Tibial artery (tissue), 4 donors: ENCODE measurements at regions of chr11 and their contacts with region 1.

Region 1: GRCh38 chr11:111200010-111200534 is 45.5 kb upstream of the POU2AF2 start:
- DNase-seq: no peak
- H3K4me3 ChIP-seq: no peak overlapping the region
- H3K27ac ChIP-seq: no peak overlapping the region
- H3K4me1 ChIP-seq: no peaks in the 10 kb centered on the region
- H3K27me3 ChIP-seq: no peaks in the 10 kb centered on the region
- CTCF ChIP-seq: no peak

Region 2: DNA sequence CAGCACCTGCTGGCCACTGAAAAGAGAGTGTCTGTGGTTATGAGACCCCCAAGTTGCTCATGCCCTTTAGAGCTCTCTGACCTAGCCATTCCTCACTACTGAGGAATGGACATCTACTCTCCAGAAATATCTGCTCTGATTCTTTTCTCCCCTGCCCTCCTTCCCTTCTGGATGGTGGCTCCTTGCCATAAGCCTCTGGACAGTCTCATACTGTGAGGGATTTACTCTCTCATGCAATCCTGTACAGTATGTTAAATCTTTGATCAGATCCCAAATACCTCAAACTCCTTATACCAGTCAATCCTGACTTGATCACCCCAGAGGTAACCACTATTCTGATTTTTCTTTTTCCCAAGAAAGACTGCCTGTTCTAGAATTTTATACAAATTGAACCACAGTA is 568.5 kb before region 1 on chr11:
- intact Hi-C with region 1: no loop called
- DNase-seq: no peak
- H3K4me3 ChIP-seq: no peak overlapping the region
- H3K27ac ChIP-seq: no peak overlapping the region
- H3K4me1 ChIP-seq: no peaks in the 10 kb centered on the region
- H3K27me3 ChIP-seq: no peaks in the 10 kb centered on the region
- CTCF ChIP-seq: no peak

Region 3: DNA sequence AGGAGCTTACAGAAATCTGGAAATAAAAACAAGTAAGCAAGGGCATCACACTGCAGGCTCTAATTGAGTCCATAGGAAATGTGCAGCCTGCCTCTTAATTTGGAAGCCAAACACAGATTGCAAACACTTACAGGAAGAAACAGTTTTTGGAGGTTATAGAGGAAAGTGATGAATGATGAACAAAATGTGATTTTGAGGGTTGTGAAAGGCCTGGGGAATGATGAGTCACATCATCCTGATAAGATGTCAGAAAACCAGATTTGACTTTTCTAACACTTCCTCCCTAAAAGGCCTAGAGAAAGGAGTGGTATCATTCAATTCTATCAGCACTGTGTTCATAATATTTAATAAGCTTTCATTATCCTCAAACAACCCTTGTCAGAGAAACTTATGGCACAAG is 51.1 kb before region 1 on chr11:
- intact Hi-C with region 1: loop called (anchors 2 kb)
- DNase-seq: no peak
- H3K4me3 ChIP-seq: no peak overlapping the region
- H3K27ac ChIP-seq: no peak overlapping the region
- H3K4me1 ChIP-seq: no peaks in the 10 kb centered on the region
- H3K27me3 ChIP-seq: no peaks in the 10 kb centered on the region
- CTCF ChIP-seq: no peak